HepG2 (cell line): ENCODE measurements at regions of chr17 and their contacts with region 1.

Region 1: DNA sequence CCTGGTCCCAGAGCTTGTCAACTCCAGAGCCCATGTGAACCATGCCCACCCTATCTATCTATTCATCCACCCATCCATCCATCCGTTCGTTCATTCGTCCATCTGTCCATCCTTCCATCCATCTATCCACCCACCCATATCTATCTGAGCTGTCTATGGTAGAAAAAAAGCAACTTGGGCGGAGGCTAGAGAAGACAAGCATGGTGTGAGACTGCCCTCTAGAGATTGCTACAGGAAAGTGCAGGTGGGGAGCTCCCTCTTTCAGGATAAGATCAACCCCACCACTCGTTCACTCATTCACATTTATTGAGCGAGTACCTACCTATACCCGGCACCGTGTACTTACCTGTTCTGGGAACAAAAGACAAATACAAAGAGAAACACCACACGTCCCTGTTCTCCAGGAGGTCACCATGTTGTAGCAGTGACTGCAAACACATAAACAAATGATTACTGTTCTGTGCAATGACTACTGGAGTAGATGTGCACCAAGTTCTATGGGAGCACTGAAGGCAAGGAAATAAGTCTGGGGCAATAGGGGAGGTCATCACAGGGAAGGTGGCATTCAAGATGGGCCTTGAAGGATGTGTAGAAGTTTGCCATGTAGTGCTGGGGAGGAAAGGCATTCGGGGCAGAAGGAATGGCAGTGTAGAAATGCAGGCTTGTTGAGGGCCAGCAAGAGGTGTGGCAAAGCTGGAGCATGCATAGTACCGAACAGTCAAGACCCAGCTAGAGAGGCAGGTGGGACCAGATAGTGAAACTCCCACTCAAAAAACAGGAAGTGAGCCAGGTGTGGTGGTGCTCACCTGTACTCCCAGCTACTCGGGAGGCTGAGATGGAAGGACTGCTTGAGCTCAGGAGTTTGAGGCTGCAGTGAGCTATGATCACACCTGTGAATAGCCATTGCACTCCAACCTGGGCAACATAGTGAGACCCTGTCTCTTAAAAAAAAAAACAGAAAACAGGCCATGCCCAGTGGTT is 13.4 kb upstream of the ATP5MC1 start:
- DNase-seq: peak; percentile 80
- ATAC-seq: peak; percentile 83
- H3K4me3 ChIP-seq: no peak overlapping the region
- H3K27ac ChIP-seq: no peak overlapping the region
- H3K4me1 ChIP-seq: peaks cover 20% of the 10 kb centered on the region
- H3K27me3 ChIP-seq: peaks cover 0 to 9% of the 10 kb centered on the region in 2 experiments; a peak in 3 of 5 replicates
- CTCF ChIP-seq: peak; percentile 97
- EP300 ChIP-seq: no peak
- POLR2A ChIP-seq: no peak
- RAD21 ChIP-seq: peak; percentile 98

Region 2: GRCh38 chr17:48561884-48562810 is 317.1 kb before region 1 on chr17:
- CTCF ChIA-PET with region 1: no interaction called
- POLR2A ChIA-PET with region 1: no interaction called
- in situ Hi-C with region 1: no loop called
- intact Hi-C with region 1: no loop called
- DNase-seq: no peak
- ATAC-seq: peak; percentile 78
- H3K4me3 ChIP-seq: no peak overlapping the region
- H3K27ac ChIP-seq: no peak overlapping the region
- H3K4me1 ChIP-seq: no peaks in the 10 kb centered on the region
- H3K27me3 ChIP-seq: peaks cover 29 to 94% of the 10 kb centered on the region in 2 experiments
- CTCF ChIP-seq: no peak
- EP300 ChIP-seq: no peak
- POLR2A ChIP-seq: no peak
- RAD21 ChIP-seq: no peak

Region 3: DNA sequence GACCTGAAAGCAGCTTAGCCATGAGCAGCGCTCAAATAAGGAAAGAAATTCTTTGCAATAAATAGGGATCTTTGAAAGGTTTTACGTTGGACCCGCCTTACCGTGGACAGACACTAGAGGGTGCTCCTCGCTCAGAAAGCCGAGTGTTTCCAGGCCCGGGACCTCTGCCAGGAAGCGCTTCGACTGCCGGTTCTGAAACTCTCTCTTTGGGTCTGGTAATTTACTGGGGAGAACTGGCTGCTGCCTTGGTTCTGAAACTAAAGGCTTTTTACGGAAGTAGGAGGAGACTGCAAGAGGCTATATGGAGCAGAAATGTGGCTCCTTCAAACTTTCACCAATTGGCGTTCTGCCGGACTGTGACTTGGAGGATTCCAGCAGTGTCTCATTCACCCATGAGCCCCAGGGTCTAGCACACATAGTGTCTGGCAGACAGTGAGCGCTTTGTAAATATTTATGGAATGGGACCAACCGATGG is 207.5 kb before region 1 on chr17:
- CTCF ChIA-PET with region 1: interaction called, 18 read pairs
- POLR2A ChIA-PET with region 1: no interaction called
- in situ Hi-C with region 1: no loop called
- intact Hi-C with region 1: loop called (anchors 1 kb)
- DNase-seq: peak; percentile 61
- ATAC-seq: peak; percentile 94
- H3K4me3 ChIP-seq: peak overlapping the region; percentile 46 to 64 (median 46)
- H3K27ac ChIP-seq: no peak overlapping the region
- H3K4me1 ChIP-seq: peaks cover 10% of the 10 kb centered on the region
- H3K27me3 ChIP-seq: peaks cover 0 to 19% of the 10 kb centered on the region in 2 experiments; a peak in 2 of 5 replicates
- CTCF ChIP-seq: peak; percentile 92
- EP300 ChIP-seq: no peak
- POLR2A ChIP-seq: no peak
- RAD21 ChIP-seq: peak; percentile 80

Region 4: DNA sequence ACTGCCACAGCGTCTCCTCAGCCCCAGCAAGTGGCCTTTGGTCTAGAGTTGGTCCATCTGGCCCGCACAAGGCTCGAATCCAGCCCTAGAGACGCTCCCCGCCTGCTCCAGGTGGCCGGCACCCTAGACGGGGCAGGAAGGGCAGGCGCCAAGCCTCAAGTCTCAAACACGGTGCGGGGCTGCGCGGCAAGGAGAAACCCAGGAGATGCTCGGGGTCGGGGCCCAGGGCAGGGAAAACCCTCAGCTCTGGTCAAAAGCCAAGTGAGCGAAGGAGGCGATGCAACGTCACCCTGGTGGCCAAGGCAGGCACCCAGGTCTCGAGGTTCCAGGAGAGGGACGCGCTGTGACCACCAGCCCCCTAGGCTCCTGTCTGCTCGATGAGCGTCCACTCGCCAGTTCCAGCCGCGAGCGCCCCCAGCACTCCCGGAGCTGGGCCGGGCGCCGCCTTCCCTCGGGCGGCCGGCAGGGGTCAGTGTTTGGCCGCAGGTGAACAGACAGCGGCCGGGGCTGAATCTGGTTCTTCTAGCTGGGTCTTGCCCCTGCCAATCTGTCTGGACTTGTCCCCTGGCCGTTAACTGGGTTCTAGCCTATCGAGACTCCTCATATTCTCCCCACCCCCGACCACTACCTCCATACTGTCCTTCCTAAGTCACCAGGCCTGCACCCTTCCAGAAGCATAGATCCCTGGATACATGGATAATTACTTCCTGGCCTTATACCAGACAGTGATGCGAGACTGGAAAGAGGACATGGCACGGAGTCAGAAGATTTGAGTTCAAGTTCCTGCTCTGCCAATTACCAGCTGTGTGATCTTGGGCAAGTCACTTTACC is 200.9 kb before region 1 on chr17:
- CTCF ChIA-PET with region 1: interaction called, 30 read pairs
- POLR2A ChIA-PET with region 1: interaction called, 5 read pairs
- in situ Hi-C with region 1: loop called (anchors 5 kb)
- intact Hi-C with region 1: loop called (anchors 1 kb)
- DNase-seq: peak; percentile 48
- ATAC-seq: peak; percentile 98
- H3K4me3 ChIP-seq: peak overlapping the region in 1 of 3 experiments; percentile 51; a peak in 1 of 6 replicates
- H3K27ac ChIP-seq: no peak overlapping the region
- H3K4me1 ChIP-seq: 0 out of 2 replicates have a peak, but pooled peaks cover 9% of the 10 kb centered on the region
- H3K27me3 ChIP-seq: peaks cover 0 to 26% of the 10 kb centered on the region in 2 experiments; a peak in 3 of 5 replicates
- CTCF ChIP-seq: peak; percentile 98
- EP300 ChIP-seq: no peak
- POLR2A ChIP-seq: no peak
- RAD21 ChIP-seq: peak; percentile 94

Region 5: GRCh38 chr17:48724251-48725003 is 154.8 kb before region 1 on chr17:
- CTCF ChIA-PET with region 1: interaction called, 47 read pairs
- POLR2A ChIA-PET with region 1: interaction called, 4 read pairs
- in situ Hi-C with region 1: loop called (anchors 5 kb)
- intact Hi-C with region 1: loop called (anchors 2 kb)
- DNase-seq: peak; percentile 56
- ATAC-seq: peak; percentile 89
- H3K4me3 ChIP-seq: no peak overlapping the region; a peak in 1 of 6 replicates
- H3K27ac ChIP-seq: no peak overlapping the region
- H3K4me1 ChIP-seq: no peaks in the 10 kb centered on the region
- H3K27me3 ChIP-seq: peaks cover 23 to 82% of the 10 kb centered on the region in 2 experiments
- CTCF ChIP-seq: peak; percentile 91
- EP300 ChIP-seq: no peak
- POLR2A ChIP-seq: no peak
- RAD21 ChIP-seq: peak; percentile 69

Region 6: DNA sequence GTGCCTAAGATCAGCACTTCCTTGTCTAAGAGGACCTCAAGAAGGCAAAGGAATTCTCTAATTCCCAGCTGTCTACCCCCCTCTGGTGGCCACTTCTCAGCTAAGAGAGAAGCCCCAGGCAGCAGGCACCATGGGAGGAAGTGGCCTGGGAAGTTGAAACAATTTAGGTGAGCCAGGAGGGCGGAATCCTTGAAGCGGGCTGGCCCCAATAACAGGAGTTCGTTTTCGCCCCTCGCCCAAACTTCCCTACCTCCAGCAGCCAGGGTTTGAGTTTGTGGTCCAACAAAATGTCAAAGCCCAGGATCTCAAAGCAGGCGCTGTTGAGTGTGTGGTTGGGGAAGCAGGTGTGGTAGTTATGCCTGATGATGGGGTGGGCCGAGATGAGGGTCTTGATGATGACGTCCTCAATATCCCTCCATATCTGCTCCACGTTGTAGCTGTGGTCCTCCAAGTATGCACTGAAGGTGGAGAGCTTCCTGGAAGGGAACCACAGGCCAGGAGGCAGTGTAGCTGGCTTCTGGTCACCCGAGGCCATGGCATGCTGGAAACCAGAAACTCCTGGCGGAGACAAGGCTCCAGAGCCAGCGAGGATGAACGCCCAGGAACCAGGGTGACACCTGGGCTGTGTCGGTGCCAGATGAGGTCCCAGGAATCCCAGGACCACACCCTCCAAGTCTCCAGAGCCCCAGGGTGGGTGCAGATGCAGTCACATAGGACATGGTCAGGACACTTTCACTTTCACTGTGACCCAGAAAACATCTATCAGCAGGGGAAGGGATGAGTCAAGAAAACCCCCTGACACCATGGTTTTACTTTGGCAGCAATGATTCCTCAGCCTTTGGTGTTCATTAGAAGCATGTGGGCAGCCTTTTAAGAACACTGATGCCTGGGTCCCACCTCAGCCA is 87.8 kb before region 1 on chr17:
- CTCF ChIA-PET with region 1: interaction called, 12 read pairs
- POLR2A ChIA-PET with region 1: interaction called, 10 read pairs
- in situ Hi-C with region 1: no loop called
- intact Hi-C with region 1: no loop called
- DNase-seq: peak; percentile 80
- ATAC-seq: peak; percentile 71
- H3K4me3 ChIP-seq: peak overlapping the region; percentile 34 to 70 (median 58)
- H3K27ac ChIP-seq: no peak overlapping the region
- H3K4me1 ChIP-seq: peaks cover 61% of the 10 kb centered on the region
- H3K27me3 ChIP-seq: peaks cover 1 to 11% of the 10 kb centered on the region in 2 experiments; a peak in 2 of 5 replicates
- CTCF ChIP-seq: peak; percentile 93
- EP300 ChIP-seq: no peak
- POLR2A ChIP-seq: no peak
- RAD21 ChIP-seq: peak; percentile 71

Region 7: DNA sequence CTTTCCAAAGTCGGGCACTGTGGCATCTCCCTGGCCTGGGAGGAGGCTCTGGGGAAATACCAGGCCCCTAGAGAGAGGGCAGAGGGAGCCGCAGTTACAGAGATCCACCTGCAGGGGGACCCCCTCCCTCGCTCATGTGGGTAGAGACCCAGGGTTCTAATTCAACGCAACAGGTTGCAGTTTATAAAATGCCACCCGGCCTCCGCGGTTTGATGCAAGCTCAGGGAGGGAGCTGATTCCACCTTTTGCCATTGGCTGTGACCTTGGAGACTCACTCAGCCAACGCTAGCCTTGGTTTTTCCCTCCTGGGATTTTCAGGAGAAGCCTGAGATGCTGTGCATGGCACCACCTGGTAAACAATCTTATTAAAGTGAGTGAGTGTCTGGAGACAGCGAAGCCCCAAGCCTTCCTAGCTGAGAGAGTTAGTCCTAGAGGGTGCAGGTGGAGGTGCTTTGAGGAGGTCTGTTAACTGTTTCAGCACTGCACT is 74.2 kb before region 1 on chr17:
- CTCF ChIA-PET with region 1: interaction called, 101 read pairs
- POLR2A ChIA-PET with region 1: interaction called, 9 read pairs
- in situ Hi-C with region 1: loop called (anchors 5 kb)
- intact Hi-C with region 1: loop called (anchors 1 kb)
- DNase-seq: peak; percentile 63
- ATAC-seq: peak; percentile 94
- H3K4me3 ChIP-seq: peak overlapping the region in 2 of 3 experiments; percentile 41 to 61; a peak in 4 of 6 replicates
- H3K27ac ChIP-seq: no peak overlapping the region
- H3K4me1 ChIP-seq: peaks cover 63% of the 10 kb centered on the region
- H3K27me3 ChIP-seq: peaks cover 0 to 6% of the 10 kb centered on the region in 2 experiments; a peak in 4 of 5 replicates
- CTCF ChIP-seq: peak; percentile 95
- EP300 ChIP-seq: no peak
- POLR2A ChIP-seq: no peak
- RAD21 ChIP-seq: peak; percentile 97

Region 8: GRCh38 chr17:48816774-48817590 is 62.2 kb before region 1 on chr17 and contains the start of gene TTLL6:
- CTCF ChIA-PET with region 1: interaction called, 155 read pairs
- POLR2A ChIA-PET with region 1: interaction called, 8 read pairs
- in situ Hi-C with region 1: loop called (anchors 5 kb)
- intact Hi-C with region 1: loop called (anchors 1 kb)
- DNase-seq: peak; percentile 87
- ATAC-seq: peak; percentile 94
- H3K4me3 ChIP-seq: peak within 1 kb of the TSS; percentile 36 to 71 (median 45); a peak in 5 of 6 replicates
- H3K27ac ChIP-seq: no peak within 1 kb of the TSS
- H3K4me1 ChIP-seq: peaks cover 31% of the 10 kb centered on the region
- H3K27me3 ChIP-seq: peaks cover 0 to 28% of the 10 kb centered on the region in 2 experiments; a peak in 3 of 5 replicates
- CTCF ChIP-seq: 0 out of 2 replicates have a peak, but pooled peaks have one; percentile 6
- EP300 ChIP-seq: no peak
- POLR2A ChIP-seq: no peak
- RAD21 ChIP-seq: no peak
- total RNA-seq, gene TTLL6: 0.04 TPM in 1 of 2 replicates, not detected in the other

Region 9: GRCh38 chr17:48843172-48843900 is 35.9 kb before region 1 on chr17:
- CTCF ChIA-PET with region 1: no interaction called
- POLR2A ChIA-PET with region 1: no interaction called
- in situ Hi-C with region 1: no loop called
- intact Hi-C with region 1: no loop called
- DNase-seq: no peak
- ATAC-seq: no peak
- H3K4me3 ChIP-seq: no peak overlapping the region
- H3K27ac ChIP-seq: no peak overlapping the region
- H3K4me1 ChIP-seq: 0 out of 2 replicates have a peak, but pooled peaks cover 8% of the 10 kb centered on the region
- H3K27me3 ChIP-seq: no peaks in the 10 kb centered on the region
- CTCF ChIP-seq: no peak
- EP300 ChIP-seq: no peak
- POLR2A ChIP-seq: no peak
- RAD21 ChIP-seq: no peak

Region 10: GRCh38 chr17:48952904-48953303 is 73.7 kb after region 1 on chr17:
- CTCF ChIA-PET with region 1: no interaction called
- POLR2A ChIA-PET with region 1: no interaction called
- in situ Hi-C with region 1: no loop called
- intact Hi-C with region 1: no loop called
- DNase-seq: no peak
- ATAC-seq: no peak
- H3K4me3 ChIP-seq: no peak overlapping the region
- H3K27ac ChIP-seq: no peak overlapping the region
- H3K4me1 ChIP-seq: peaks cover 33% of the 10 kb centered on the region
- H3K27me3 ChIP-seq: no peaks in the 10 kb centered on the region
- CTCF ChIP-seq: no peak
- EP300 ChIP-seq: no peak
- POLR2A ChIP-seq: no peak
- RAD21 ChIP-seq: no peak

Region 11: GRCh38 chr17:49108318-49108717 is 229.1 kb after region 1 on chr17:
- CTCF ChIA-PET with region 1: no interaction called
- POLR2A ChIA-PET with region 1: no interaction called
- in situ Hi-C with region 1: no loop called
- intact Hi-C with region 1: no loop called
- DNase-seq: no peak
- ATAC-seq: no peak
- H3K4me3 ChIP-seq: no peak overlapping the region
- H3K27ac ChIP-seq: no peak overlapping the region
- H3K4me1 ChIP-seq: peaks cover 50% of the 10 kb centered on the region
- H3K27me3 ChIP-seq: no peaks in the 10 kb centered on the region
- CTCF ChIP-seq: no peak
- EP300 ChIP-seq: no peak
- POLR2A ChIP-seq: no peak
- RAD21 ChIP-seq: no peak